ENCODE measurements at regions of chr5 and their contacts with region 1.

Region 1: DNA sequence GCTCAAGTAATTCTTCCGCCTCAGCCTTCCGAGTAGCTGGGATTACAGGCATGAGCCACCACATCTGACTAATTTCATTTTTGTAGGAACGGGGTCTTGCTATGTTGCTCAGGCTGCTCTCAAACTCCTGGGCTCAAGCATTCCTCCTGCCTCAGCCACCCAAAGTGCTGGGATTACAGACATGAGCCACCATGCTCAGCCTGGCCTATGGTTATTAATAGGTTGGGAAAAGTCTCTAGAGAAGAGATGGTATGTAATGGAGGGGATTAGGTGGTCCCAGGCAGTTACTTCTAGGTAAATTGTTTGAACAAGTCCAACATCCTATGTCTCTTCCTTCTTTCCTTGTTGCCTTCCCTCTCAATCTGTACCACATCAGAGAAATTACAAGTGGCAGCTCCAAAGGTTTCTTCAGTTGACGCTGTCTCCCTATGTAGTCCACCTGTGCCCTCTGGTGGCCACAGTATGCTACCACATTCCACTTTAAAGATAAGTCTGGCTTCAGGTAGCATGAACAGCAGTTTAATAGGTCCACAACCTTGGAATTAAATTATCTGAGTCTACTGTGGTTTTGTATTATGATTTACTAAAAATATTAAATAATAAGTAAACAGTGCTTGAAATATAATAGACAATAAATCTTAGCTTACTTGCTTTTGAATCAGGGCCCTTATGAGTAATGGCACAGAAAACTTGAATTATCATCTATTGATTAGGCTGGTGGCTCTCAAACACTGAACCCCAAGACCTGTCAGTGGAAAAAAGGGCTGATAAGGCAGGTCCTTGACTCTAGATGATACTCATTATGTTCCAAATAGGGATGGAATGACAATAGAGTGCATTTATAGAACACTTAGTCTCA is 9.7 kb downstream of the TIGD6 start:
- DNase-seq: peak in 2 of 3 donors; percentile 48 to 63
- ATAC-seq: peak; percentile 96 to 99 (median 98)
- H3K4me3 ChIP-seq: no peak overlapping the region
- H3K27ac ChIP-seq: no peak overlapping the region
- H3K4me1 ChIP-seq: no peaks in the 10 kb centered on the region
- H3K27me3 ChIP-seq: no peaks in the 10 kb centered on the region
- CTCF ChIP-seq: peak; percentile 89 to 94 (median 91)
- POLR2A ChIP-seq: no peak

Region 2: DNA sequence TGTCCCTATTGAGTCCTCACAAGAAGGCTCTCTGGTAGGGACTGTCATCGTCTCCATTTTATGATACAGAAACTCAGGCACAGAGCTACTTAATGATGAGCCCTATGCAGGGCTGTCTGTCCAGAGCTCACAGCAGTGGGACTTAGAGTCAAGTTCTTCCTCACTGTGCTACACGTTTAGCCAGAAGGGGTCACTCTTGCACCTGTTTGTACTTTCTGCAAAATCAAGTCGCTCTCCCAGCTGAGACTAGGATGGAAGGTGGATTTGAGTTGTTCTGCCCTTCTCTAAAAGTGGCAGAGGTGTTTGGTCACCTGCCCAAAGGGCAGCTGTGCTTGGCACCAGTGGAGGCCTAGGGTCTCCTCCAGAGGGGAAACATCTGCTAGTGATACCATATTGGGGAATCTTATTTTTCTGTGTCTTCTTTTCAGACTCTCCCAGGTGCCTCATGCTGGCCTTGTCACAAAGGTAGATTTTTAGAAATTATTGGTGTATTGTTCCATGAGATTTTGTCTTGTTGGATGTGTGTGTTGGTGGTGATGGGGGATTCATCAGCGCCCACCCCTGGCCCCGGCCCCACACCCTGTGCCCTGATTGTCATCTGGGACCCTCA is 156.4 kb before region 1 on chr5:
- intact Hi-C with region 1: loop called (anchors 5 to 10 kb)
- DNase-seq: peak in 1 of 3 donors; percentile 55
- ATAC-seq: peak; percentile 65 to 78 (median 74)
- H3K4me3 ChIP-seq: no peak overlapping the region
- H3K27ac ChIP-seq: no peak overlapping the region
- H3K4me1 ChIP-seq: no peaks in the 10 kb centered on the region
- H3K27me3 ChIP-seq: no peaks in the 10 kb centered on the region
- CTCF ChIP-seq: peak; percentile 50 to 63 (median 60)
- POLR2A ChIP-seq: no peak

Measured in right lobe of liver (tissue), 6 donors.